ENCODE measurements at regions of chr1 and their contacts with region 1.

Region 1: DNA sequence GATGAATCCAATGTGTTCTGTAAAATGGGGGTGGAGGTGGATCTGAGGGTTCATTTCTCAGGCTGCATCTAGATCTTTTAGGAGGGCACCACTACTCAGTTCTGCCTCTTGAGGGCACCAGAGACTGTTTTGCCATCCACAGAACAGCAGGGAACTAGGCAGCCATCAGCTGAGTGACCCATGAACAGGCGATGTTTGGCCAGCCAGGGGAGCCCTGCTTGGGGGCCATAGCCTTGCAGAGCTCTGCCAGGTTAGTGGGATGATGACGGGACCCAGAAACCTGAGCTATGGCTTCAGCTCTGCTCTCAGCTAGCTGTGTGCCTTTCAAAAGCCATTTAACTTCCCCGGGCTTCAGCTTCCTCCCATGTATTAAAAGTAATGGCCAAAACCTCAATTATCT is 13.4 kb upstream of the NOS1AP start:
- DNase-seq: peak; percentile 70 to 88
- H3K4me3 ChIP-seq: no peak overlapping the region
- H3K27ac ChIP-seq: no peak overlapping the region
- H3K4me1 ChIP-seq: peaks cover 0 to 14% (median 3%) of the 10 kb centered on the region in 4 donors
- H3K27me3 ChIP-seq: no peaks in the 10 kb centered on the region
- CTCF ChIP-seq: peak in 5 of 7 experiments; percentile 82 to 87 (median 84)
- EP300 ChIP-seq: no peak
- POLR2A ChIP-seq: no peak

Region 2: DNA sequence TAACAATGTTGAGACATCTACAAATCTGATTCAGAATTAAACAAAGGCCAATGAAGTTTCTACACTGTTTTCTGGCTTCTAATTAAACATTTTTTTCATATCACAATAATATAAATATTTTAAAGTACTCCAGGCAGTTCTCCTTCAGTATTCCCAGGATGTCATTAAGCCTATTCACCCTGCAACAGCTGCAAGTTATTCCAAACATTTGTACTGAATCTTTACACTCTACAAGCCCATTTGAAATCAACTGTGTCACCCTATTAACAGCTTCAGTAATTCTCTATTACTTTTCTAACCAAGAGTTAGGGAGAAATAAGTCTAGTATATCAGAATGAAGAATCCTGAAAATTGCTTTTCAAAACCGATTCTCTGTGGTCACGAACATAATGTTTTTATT is 157.0 kb before region 1 on chr1:
- intact Hi-C with region 1: no loop called
- DNase-seq: no peak
- H3K4me3 ChIP-seq: no peak overlapping the region
- H3K27ac ChIP-seq: no peak overlapping the region
- H3K4me1 ChIP-seq: no peaks in the 10 kb centered on the region
- H3K27me3 ChIP-seq: no peaks in the 10 kb centered on the region
- CTCF ChIP-seq: no peak
- EP300 ChIP-seq: no peak
- POLR2A ChIP-seq: no peak

Region 3: DNA sequence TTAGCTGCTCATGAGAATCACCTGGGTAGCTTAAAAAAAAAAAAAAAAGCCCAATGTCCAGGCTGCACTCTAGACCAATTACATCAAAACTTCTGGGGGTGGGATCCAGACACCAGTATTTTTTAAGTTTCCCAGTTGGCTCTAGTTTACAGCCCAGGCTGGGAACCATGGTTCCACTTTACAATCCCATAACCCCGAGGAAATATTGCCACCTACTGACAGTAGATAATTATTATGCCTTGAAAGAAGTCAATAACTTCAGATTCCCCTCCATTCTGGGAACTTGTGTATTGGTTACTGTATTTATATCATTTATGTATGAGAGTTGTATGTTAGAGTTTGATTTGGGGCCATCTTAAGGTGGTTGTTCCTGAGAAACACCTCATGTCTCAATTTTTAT is 220.4 kb after region 1 on chr1:
- intact Hi-C with region 1: loop called (anchors 10 kb)
- DNase-seq: peak in 1 of 2 donors; percentile 57
- H3K4me3 ChIP-seq: no peak overlapping the region
- H3K27ac ChIP-seq: no peak overlapping the region
- H3K4me1 ChIP-seq: peaks cover 0 to 8% (median 3%) of the 10 kb centered on the region in 4 donors
- H3K27me3 ChIP-seq: no peaks in the 10 kb centered on the region
- CTCF ChIP-seq: peak in 3 of 7 experiments; percentile 21 to 37 (median 36)
- EP300 ChIP-seq: no peak
- POLR2A ChIP-seq: no peak

Region 4: GRCh38 chr1:162389021-162389818 is 333.2 kb after region 1 on chr1:
- intact Hi-C with region 1: loop called (anchors 5 kb)
- DNase-seq: peak in 1 of 2 donors; percentile 19
- H3K4me3 ChIP-seq: no peak overlapping the region
- H3K27ac ChIP-seq: no peak overlapping the region
- H3K4me1 ChIP-seq: peaks cover 0 to 8% (median 3%) of the 10 kb centered on the region in 4 donors
- H3K27me3 ChIP-seq: no peaks in the 10 kb centered on the region
- CTCF ChIP-seq: no peak
- EP300 ChIP-seq: no peak
- POLR2A ChIP-seq: no peak